Tibial artery (tissue), 4 donors: ENCODE measurements at regions of chr5 and their contacts with region 1.

Region 1: GRCh38 chr5:81851481-81852178 is 100.7 kb upstream of the SSBP2 start:
- DNase-seq: peak; percentile 96 to 99
- H3K4me3 ChIP-seq: peak overlapping the region; percentile 54 to 62
- H3K27ac ChIP-seq: peak overlapping the region; percentile 86 to 88
- H3K4me1 ChIP-seq: peaks cover 0 to 81% (median 55%) of the 10 kb centered on the region in 4 donors
- H3K27me3 ChIP-seq: no peaks in the 10 kb centered on the region
- CTCF ChIP-seq: peak in 1 of 2 experiments; percentile 5

Region 2: DNA sequence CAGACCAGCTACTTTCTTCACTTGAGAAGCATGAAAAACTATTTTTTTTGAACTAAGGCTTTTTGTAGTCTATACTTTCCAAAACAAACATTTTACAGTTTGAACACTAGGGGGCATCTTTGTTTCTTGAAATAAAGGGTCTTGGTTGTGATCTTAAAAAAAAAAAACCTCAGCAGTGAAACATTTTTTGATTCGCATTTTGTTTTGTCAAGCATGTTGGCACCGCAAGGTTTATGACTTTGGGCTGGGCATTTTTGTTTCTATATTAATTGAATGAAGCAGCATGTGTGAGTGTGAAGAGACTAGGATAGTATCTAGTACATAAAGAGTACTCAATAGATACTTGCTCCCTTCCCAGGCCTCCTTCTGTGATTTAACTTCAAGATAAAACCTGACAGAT is 426.1 kb before region 1 on chr5:
- intact Hi-C with region 1: loop called (anchors 10 kb)
- DNase-seq: no peak
- H3K4me3 ChIP-seq: no peak overlapping the region
- H3K27ac ChIP-seq: peak overlapping the region; percentile 37 to 46
- H3K4me1 ChIP-seq: peaks cover 0 to 23% (median 7%) of the 10 kb centered on the region in 4 donors
- H3K27me3 ChIP-seq: no peaks in the 10 kb centered on the region
- CTCF ChIP-seq: peak; percentile 61 to 70

Region 3: DNA sequence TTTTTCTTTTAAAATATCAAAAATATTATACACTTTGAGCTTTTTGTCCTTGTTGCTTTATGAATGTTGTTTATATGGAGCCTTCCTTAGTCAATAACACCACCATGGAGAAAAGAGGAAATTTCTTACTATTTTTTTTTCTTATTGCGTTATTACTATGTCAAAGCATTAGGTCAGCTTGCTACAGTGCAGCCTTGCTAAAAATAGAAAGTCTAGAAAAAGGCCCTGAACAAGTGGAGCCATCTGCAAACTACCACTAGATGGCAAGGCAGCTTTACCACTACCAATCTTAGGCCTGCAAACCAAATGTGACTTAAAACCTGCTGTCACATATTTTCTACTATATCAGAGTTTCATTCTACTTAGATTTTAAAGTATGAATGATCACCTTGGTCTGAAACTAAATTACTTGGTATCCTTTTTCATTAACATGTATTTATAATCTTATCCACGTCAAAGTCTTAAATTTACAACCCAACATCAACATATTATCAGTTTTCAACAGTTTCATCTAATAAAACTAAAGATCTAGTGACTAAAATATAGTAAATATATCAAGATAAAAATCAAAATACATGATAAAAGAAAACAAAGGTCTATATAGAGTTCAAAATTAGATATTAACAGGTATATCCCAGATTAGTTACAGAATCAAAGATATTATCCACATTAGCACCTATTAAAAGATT is 344.6 kb before region 1 on chr5:
- intact Hi-C with region 1: loop called (anchors 10 kb)
- DNase-seq: peak; percentile 71 to 76
- H3K4me3 ChIP-seq: no peak overlapping the region
- H3K27ac ChIP-seq: peak overlapping the region; percentile 41 to 51
- H3K4me1 ChIP-seq: peaks cover 0 to 23% (median 4%) of the 10 kb centered on the region in 4 donors
- H3K27me3 ChIP-seq: no peaks in the 10 kb centered on the region
- CTCF ChIP-seq: peak; percentile 83 to 91

Region 4: GRCh38 chr5:81751009-81751835 is 100.4 kb before region 1 on chr5 and contains the start of gene SSBP2:
- intact Hi-C with region 1: loop called (anchors 1 kb)
- DNase-seq: peak; percentile 99 to 100
- H3K4me3 ChIP-seq: peak within 1 kb of the TSS; percentile 94 to 99
- H3K27ac ChIP-seq: peak within 1 kb of the TSS; percentile 98 to 99
- H3K4me1 ChIP-seq: peaks cover 0 to 78% (median 48%) of the 10 kb centered on the region in 4 donors
- H3K27me3 ChIP-seq: no peaks in the 10 kb centered on the region
- CTCF ChIP-seq: no peak

Region 5: DNA sequence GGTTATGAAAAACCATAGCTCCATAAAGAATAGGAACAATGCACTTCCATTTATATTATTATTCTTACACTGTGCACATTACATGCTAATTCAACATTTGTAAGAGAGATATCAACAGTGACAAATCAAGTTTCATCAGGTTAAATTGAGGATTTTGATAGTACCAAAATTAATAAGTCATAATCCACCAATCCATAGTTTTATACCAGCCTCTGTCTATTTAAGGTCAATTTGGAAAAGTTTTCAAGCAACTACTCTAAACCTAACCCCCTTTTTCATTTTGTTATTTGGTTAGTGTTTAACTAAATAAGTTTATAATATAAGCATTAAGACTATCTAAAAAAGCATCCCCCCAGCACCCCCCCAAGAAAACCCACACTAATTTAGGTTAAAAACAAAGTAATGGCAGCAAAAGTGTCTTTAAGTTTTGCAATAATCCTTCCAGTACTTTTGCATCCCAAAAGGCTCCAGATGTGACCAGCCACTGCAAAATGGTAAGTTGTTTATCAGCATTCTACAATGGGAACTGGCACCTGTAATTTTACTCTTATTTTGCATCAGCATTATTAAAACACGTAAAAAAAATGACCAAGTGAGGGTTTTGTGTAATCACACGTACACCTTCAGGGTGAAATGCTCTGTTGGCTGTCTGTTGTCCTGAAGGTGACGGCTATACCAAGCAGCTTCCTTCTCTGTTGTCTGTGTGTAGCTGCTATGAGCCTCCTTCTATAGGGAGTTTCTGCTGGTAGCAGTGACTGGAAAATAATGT is 64.0 kb before region 1 on chr5:
- intact Hi-C with region 1: loop called (anchors 2 kb)
- DNase-seq: peak; percentile 78 to 88
- H3K4me3 ChIP-seq: no peak overlapping the region
- H3K27ac ChIP-seq: peak overlapping the region; percentile 41 to 53
- H3K4me1 ChIP-seq: peaks cover 0 to 35% (median 24%) of the 10 kb centered on the region in 4 donors
- H3K27me3 ChIP-seq: no peaks in the 10 kb centered on the region
- CTCF ChIP-seq: no peak

Region 6: DNA sequence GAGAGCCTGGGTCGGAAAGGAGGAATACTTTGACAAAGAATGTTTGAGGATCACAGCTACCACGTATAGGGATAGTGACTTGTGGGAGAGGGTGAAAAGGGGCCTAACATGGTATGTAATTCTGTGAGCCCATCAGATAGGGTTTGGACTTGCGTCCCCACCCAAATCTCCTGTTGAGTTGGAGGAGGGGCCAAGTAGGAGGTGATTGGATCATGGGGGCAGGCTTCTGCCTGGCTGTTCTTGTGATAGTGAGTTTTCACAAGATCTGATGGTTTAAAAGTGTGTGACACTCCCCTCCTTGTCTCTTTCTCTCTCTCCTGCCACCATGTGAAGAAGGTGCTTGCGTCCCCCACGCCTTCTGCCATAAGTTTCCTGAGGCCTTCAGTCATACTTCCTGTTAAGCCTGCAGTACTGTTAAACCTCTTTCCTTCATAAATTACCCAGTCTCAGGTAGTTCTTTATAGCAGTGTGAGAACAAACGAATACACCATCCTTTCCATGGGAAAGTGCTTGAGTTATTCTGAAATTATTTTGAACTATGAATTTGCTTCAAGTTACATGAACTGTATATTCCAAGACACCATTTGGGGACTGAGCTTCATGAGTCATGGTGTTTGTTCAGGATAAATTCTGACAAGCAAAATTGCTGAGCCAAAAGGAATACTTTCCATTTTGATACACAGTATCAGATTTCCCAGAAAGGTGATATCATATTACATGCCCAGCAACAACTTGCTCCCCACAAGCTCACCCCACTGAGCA is 31.9 kb before region 1 on chr5:
- intact Hi-C with region 1: no loop called
- DNase-seq: no peak
- H3K4me3 ChIP-seq: no peak overlapping the region
- H3K27ac ChIP-seq: no peak overlapping the region
- H3K4me1 ChIP-seq: peaks cover 0 to 12% (median 2%) of the 10 kb centered on the region in 4 donors
- H3K27me3 ChIP-seq: no peaks in the 10 kb centered on the region
- CTCF ChIP-seq: no peak

Region 7: GRCh38 chr5:81971712-81972495 is 120.3 kb after region 1 on chr5 and contains the start of gene ATG10:
- intact Hi-C with region 1: loop called (anchors 5 kb)
- DNase-seq: peak; percentile 87 to 95
- H3K4me3 ChIP-seq: peak within 1 kb of the TSS; percentile 65 to 77
- H3K27ac ChIP-seq: peak within 1 kb of the TSS; percentile 97 to 98
- H3K4me1 ChIP-seq: peaks cover 0 to 10% (median 5%) of the 10 kb centered on the region in 4 donors
- H3K27me3 ChIP-seq: no peaks in the 10 kb centered on the region
- CTCF ChIP-seq: no peak

Region 8: DNA sequence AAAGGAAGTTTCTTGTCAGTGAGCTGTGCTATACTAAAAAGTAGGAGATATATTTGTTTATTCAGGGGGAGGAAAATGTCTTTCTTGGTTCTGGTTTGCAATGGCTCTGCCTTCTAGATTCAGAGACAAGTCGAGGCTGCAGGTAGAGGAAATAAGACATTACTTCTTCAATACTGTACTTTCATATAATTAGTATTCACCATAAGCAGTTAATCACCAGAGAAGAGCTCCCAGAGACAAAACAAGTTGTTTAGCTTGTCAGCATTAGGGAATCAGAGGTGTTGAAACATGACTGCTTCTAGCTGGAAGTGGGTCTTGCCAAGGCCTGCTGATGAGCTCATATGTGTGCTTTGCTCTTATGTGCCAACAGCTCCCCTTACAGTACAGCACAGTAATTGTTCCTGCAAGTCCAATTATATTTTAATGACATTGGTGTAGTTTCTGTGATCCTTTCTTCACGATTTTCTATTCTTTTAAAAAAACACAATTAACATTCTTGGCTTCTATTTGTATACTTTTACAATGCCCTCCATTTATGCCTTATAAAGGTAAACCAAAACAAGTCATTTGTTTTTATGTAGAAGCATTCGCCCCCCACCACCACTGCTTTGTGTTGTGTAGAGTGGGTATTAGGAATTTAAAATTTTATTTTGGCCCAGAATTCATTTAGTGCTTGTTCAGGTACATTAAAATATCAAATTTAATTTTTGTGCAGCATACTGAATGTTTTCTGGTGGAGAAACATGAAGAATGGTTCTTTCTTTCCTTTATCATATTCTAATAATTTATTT is 314.3 kb after region 1 on chr5:
- intact Hi-C with region 1: loop called (anchors 10 kb)
- DNase-seq: peak; percentile 82 to 84
- H3K4me3 ChIP-seq: no peak overlapping the region
- H3K27ac ChIP-seq: peak overlapping the region in 1 of 2 donors; percentile 3
- H3K4me1 ChIP-seq: peaks cover 0 to 24% (median 14%) of the 10 kb centered on the region in 4 donors
- H3K27me3 ChIP-seq: no peaks in the 10 kb centered on the region
- CTCF ChIP-seq: peak; percentile 77 to 83